ENCODE measurements at regions of chr2 and their contacts with region 1.

Region 1: DNA sequence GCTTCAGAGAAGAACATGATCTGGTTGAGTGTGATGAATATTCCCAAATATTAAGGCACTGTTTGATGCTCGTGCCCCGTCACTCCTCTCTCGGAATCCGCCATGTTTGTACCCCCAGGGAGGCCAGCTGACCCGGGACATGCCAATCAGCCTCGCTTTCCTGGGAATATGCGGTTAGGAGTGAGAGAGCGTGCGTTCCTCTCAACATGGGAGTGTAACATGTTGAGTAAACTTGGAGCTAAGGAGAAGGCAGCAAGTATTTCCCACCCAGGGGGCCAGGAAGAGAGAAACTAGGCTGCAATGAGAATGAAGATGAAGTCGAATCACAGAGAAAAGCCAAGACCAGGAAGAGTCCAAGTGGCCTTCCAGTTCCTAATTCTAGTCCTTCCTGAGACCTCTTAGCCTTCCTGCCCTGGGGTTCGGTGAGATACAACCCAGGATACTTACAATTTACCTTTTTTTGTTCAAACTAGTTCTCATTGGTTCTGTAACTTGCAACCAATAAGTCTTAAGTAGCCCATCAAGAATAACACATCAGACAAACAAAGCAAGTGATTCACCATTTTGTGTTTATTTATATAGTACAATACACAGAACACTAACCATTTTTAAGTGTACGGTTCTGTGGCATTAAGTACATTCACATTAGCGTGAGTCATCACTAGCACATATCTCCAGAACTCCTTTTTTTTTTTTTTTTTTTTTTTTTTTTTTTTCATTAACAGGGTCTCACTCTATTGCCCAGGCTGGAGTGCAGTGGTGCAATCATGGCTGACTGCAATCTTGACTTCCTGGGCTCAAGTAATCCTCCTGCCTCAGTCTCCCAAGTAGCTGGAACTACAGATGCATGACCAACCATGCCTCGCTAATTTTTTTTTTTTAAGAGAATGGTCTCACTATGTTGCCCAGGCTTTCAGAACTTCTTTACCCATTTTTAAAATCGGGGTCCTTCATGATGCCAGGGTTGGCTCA is 36.4 kb upstream of the SLC1A4 start:
- DNase-seq: no peak
- ATAC-seq: no peak
- H3K4me3 ChIP-seq: no peak overlapping the region
- H3K27ac ChIP-seq: no peak overlapping the region
- H3K4me1 ChIP-seq: peaks cover 7% of the 10 kb centered on the region; the same call in 1 of the 2 replicates
- H3K27me3 ChIP-seq: no peaks in the 10 kb centered on the region
- CTCF ChIP-seq: no peak
- EP300 ChIP-seq: no peak
- POLR2A ChIP-seq: no peak
- RAD21 ChIP-seq: no peak

Region 2: DNA sequence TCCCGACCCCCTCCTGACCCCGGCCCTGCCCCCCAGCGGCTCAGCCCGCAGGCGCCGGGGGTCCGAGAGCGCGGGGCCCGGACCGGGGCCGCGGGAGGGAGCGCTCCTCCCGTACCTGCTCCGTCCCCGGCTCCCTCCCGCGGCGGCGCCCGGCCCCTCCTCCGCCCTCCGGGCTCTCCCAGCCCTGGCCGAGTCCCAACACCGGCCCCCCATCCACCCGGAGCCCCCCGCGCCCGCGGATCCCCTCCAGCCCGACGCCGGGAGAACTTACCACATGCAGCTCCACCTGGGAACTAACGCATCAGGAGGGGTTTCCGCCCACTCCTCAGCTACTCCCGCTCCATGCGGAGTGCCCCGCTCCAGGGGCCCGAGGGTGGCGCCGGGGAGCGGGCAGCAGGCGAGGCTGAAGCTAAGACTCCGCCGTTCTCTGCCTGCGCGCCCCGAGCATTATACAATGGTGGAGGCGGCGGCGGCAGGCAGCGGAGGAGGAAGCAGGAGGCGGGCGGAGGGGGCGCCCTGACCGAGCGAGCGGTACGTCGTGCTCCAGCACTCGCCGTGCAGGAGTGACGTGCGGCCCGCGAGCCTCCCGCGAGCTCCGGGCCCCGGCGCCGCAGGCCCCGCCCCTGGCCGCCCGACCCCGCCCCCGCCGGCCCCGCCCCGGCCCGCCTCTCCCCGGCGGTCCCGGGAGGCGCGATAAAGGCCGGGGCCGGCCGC is 299.3 kb before region 1 on chr2 and contains the start of gene SERTAD2:
- CTCF ChIA-PET with region 1: no interaction called
- POLR2A ChIA-PET with region 1: no interaction called
- RAD21 ChIA-PET with region 1: no interaction called
- SMC1A ChIA-PET with region 1: no interaction called
- in situ Hi-C with region 1: no loop called
- intact Hi-C with region 1: no loop called
- DNase-seq: no peak
- ATAC-seq: peak; percentile 70
- H3K4me3 ChIP-seq: peak within 1 kb of the TSS; percentile 95
- H3K27ac ChIP-seq: peak within 1 kb of the TSS; percentile 81
- H3K4me1 ChIP-seq: peaks cover 51% of the 10 kb centered on the region
- H3K27me3 ChIP-seq: no peaks in the 10 kb centered on the region
- CTCF ChIP-seq: 0 out of 6 replicates have a peak, but pooled peaks of 1 of the 3 experiments have one; percentile 6
- EP300 ChIP-seq: no peak
- POLR2A ChIP-seq: peak; percentile 90
- RAD21 ChIP-seq: 0 out of 2 replicates have a peak, but pooled peaks have one; percentile 19
- polyA plus RNA-seq, gene SERTAD2: 7.9 TPM

Region 3: DNA sequence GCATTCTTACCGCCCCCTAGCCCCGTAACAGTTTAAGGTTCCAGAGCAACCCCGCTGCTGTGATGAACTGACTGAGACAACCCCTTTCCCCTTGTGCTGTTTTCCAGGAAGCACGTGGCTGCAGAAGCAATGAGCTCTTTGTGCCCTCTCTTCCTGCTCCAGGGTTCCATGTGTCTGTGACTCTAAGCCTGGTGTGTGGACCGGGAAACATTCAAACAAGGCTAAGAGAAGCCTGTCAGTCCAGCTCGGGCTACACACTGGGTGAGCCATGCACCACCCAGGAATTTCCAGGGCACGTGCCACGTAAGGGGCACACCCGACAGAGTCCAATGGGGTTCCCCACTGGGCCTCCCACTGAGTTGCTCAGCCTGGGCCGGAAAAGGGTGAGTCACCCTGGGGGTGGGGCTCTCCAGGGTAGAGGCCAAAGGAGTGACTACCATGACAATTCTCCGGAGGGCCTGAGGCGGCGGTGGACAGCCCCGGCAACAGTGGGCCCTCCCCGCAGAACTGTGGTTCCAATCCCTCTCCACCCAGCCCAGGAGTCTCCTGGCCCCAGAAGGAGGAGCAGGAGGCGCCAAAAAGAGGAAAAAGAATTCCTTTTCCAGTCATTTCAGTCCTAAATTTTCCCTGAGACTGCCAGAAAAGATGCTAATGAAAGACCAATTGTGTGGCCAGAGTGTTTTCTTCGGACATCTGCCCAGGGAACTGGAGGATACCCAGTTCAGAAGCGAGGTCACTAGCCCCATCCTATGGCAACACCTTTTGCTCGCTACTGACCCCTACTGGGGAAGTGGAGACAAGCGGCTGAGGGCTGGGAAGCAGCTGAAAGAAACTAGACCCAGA is 121.4 kb before region 1 on chr2:
- CTCF ChIA-PET with region 1: no interaction called
- POLR2A ChIA-PET with region 1: no interaction called
- RAD21 ChIA-PET with region 1: no interaction called
- SMC1A ChIA-PET with region 1: no interaction called
- in situ Hi-C with region 1: no loop called
- intact Hi-C with region 1: no loop called
- DNase-seq: peak; percentile 71
- ATAC-seq: peak; percentile 96
- H3K4me3 ChIP-seq: peak overlapping the region; percentile 19; the same call in 1 of the 2 replicates
- H3K27ac ChIP-seq: peak overlapping the region; percentile 80
- H3K4me1 ChIP-seq: peaks cover 12% of the 10 kb centered on the region
- H3K27me3 ChIP-seq: no peaks in the 10 kb centered on the region
- CTCF ChIP-seq: peak; percentile 80 to 99 (median 98)
- EP300 ChIP-seq: 0 out of 4 replicates have a peak, but pooled peaks of 1 of the 2 experiments have one; percentile 10
- POLR2A ChIP-seq: no peak; the same call in none of the 2 replicates
- RAD21 ChIP-seq: peak; percentile 85

Region 4: DNA sequence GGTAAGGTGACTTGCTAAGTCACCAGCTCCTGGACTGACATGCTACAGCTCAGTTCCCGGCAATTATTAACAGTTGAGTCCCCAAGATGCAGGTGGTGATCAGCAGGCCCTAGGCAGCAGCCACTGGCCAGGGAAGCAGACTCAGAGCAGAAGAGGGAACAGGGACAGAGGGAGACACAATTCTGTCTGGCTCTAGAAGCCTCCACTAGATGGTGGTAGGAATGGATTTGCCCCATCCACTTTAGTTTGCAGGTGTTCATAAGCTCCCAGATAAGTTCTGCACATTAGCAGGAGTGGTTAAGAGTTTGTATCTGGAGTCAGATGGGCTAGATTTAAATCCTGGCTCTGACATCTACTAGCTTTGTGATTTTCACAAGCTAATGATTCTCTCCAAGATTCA is 10.9 kb after region 1 on chr2:
- CTCF ChIA-PET with region 1: interaction called, 3 read pairs
- POLR2A ChIA-PET with region 1: no interaction called
- RAD21 ChIA-PET with region 1: no interaction called
- SMC1A ChIA-PET with region 1: interaction called, 23 read pairs
- in situ Hi-C with region 1: no loop called
- intact Hi-C with region 1: no loop called
- DNase-seq: no peak
- ATAC-seq: no peak; the same call in 2 of the 3 replicates
- H3K4me3 ChIP-seq: no peak overlapping the region
- H3K27ac ChIP-seq: no peak overlapping the region
- H3K4me1 ChIP-seq: no peaks in the 10 kb centered on the region
- H3K27me3 ChIP-seq: no peaks in the 10 kb centered on the region
- CTCF ChIP-seq: 0 out of 6 replicates have a peak, but pooled peaks of 1 of the 3 experiments have one; percentile 6
- EP300 ChIP-seq: no peak
- POLR2A ChIP-seq: no peak
- RAD21 ChIP-seq: 0 out of 2 replicates have a peak, but pooled peaks have one; percentile 17